A549 (cell line): ENCODE measurements at regions of chr9 and their contacts with region 1.

Region 1: GRCh38 chr9:124126571-124127289 is 115.2 kb downstream of the LHX2 start:
- DNase-seq: peak; percentile 71 to 75
- ATAC-seq: peak; percentile 62 to 82; a peak in 5 of 6 replicates
- H3K4me3 ChIP-seq: no peak overlapping the region
- H3K27ac ChIP-seq: peak overlapping the region in 1 of 2 experiments; percentile 47; a peak in 2 of 6 replicates
- H3K4me1 ChIP-seq: peaks cover 14% of the 10 kb centered on the region; the same call in 2 of the 3 replicates
- CTCF ChIP-seq: peak; percentile 91
- EP300 ChIP-seq: no peak
- POLR2A ChIP-seq: no peak
- RAD21 ChIP-seq: peak; percentile 93 to 95

Region 2: DNA sequence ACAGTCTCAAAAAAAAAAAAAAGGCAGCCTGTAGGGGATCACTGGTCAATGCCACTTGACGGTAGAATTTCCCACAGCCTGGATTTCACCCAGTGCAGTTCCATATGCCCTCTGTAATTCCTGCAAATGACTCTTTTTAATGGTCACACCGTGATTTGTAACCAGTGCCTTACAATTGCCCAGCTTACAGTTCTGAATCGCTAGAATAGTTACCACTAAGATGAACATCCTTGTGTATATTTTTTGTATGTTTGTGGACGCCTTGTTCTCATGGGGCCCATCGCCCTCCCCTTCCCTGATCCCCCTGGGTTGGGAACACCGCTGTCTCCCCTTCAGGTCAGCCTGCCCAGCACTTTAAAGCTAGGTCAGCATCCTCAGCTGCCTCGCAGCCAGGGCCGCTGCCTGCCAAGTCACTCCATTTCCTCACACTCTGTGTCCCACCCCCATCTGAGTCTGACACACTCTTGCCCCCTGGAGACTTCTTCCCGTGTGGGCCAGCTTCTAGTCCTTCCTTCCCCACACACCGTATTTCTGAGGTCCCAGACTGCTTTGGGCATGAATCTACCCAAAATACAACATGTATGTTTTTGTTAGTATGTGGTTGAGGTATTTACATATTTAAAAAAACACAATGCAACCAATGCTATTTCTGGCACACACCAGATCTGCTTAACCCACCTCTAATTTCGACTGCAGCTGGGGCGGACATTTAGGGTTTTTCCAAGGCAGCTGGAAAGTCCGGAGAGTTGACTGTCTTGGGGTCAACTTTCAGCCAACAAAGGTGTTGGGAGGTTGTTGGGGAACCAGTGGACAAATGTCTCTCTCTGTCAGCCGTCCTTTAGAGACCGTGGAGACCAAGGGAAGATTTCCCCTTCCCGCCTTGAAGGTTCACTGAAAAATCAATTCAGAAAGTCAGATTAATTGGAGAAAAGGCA is 10.5 kb after region 1 on chr9:
- CTCF ChIA-PET with region 1: interaction called, 20 read pairs
- POLR2A ChIA-PET with region 1: no interaction called
- DNase-seq: no peak
- ATAC-seq: no peak
- H3K4me3 ChIP-seq: no peak overlapping the region
- H3K27ac ChIP-seq: peak overlapping the region in 1 of 2 experiments; percentile 15; a peak in 1 of 6 replicates
- H3K4me1 ChIP-seq: no peaks in the 10 kb centered on the region
- CTCF ChIP-seq: no peak
- EP300 ChIP-seq: no peak
- POLR2A ChIP-seq: no peak
- RAD21 ChIP-seq: no peak

Region 3: GRCh38 chr9:124190761-124191160 is 64.0 kb after region 1 on chr9:
- CTCF ChIA-PET with region 1: interaction called, 10 read pairs
- POLR2A ChIA-PET with region 1: no interaction called
- DNase-seq: no peak
- ATAC-seq: no peak
- H3K4me3 ChIP-seq: no peak overlapping the region
- H3K27ac ChIP-seq: no peak overlapping the region
- H3K4me1 ChIP-seq: no peaks in the 10 kb centered on the region
- CTCF ChIP-seq: no peak
- EP300 ChIP-seq: no peak
- POLR2A ChIP-seq: no peak
- RAD21 ChIP-seq: no peak

Region 4: DNA sequence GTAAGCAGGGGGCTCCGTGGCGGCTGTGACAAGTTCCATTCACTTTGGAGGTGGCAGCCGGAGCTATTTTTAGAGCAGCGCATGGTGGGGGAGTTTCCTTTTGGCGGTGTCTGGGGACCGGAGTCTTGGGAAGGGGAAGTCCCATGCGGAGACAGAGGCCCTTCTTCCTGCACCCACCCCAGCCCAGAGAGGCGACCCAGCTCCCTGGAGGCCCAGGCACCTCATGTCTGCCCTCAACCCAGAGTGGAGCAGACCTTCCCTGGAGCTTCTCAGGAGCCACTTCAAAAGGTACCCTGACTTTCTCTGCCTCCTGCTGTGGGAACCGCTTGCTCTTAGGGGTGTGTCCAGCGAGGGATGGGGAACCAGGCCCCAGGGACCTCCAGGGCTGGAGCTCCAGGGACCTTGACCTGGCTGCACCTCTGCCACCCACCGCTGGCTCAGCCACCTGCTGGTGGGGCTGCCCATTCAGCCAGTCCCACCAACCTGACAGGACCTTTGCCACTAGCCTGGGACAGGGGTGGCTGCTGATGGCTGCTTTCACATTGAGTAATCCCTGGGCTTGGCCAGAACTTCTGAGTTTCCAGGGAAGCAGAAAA is 165.2 kb after region 1 on chr9:
- CTCF ChIA-PET with region 1: interaction called, 16 read pairs
- POLR2A ChIA-PET with region 1: no interaction called
- DNase-seq: no peak
- ATAC-seq: peak in 1 of 2 experiments; percentile 19; a peak in 3 of 6 replicates
- H3K4me3 ChIP-seq: no peak overlapping the region
- H3K27ac ChIP-seq: peak overlapping the region; percentile 42 to 71; a peak in 5 of 6 replicates
- H3K4me1 ChIP-seq: peaks cover 74% of the 10 kb centered on the region
- CTCF ChIP-seq: no peak
- EP300 ChIP-seq: no peak
- POLR2A ChIP-seq: no peak
- RAD21 ChIP-seq: no peak

Region 5: DNA sequence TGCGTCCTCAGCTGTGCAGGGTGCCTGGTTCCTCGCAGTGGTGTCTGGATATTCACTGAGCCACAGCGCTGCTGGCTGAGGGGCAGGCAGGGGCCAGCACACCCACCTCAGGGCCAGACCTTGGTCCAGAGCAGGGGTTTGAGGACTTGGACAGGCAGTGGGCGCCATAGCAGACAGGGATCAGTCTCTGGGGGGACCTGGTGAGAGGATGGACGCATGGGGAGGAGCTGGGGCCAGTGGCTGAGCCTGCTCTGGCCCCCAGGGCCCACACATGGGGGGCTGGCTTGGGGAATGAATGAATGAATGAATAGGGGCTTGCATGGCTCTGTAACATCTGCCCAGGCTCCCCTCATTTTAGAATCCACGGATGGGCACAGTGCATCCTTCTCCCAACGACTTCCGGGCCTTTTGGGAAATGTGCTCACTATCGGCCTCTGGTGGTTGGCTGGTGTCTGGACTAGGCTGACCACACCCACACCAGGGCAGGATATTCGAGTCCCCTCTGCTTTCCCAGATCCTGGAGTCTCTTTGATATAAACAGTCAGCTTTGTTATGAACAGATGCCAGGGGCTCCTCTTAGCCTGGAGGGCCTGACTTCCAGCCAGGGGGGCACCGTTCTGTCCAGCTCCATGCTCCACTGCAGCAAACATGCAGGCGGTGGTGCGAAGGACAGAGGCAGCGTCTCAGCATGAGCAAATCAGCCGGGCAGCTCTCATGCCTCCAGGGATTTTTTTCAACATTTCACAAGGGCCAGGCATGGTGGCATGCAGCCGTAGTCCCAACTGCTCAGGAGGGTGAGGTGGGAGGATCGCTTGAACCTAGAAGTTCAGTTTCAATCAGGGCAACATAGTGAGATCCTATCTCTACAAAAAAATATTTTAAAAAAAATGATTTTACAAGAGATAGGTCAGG is 193.6 kb after region 1 on chr9:
- CTCF ChIA-PET with region 1: interaction called, 49 read pairs
- POLR2A ChIA-PET with region 1: no interaction called
- DNase-seq: peak; percentile 64 to 91
- ATAC-seq: peak; percentile 91 to 95
- H3K4me3 ChIP-seq: no peak overlapping the region
- H3K27ac ChIP-seq: peak overlapping the region; percentile 46 to 70; a peak in 4 of 6 replicates
- H3K4me1 ChIP-seq: 0 out of 3 replicates have a peak, but pooled peaks cover 3% of the 10 kb centered on the region
- CTCF ChIP-seq: peak; percentile 78
- EP300 ChIP-seq: no peak
- POLR2A ChIP-seq: no peak
- RAD21 ChIP-seq: peak; percentile 70 to 74

Region 6: GRCh38 chr9:124357721-124358361 is 231.1 kb after region 1 on chr9:
- CTCF ChIA-PET with region 1: interaction called, 13 read pairs
- POLR2A ChIA-PET with region 1: no interaction called
- DNase-seq: no peak
- ATAC-seq: peak in 1 of 2 experiments; percentile 53; a peak in 3 of 6 replicates
- H3K4me3 ChIP-seq: no peak overlapping the region
- H3K27ac ChIP-seq: no peak overlapping the region
- H3K4me1 ChIP-seq: no peaks in the 10 kb centered on the region
- CTCF ChIP-seq: peak; percentile 36
- EP300 ChIP-seq: no peak
- POLR2A ChIP-seq: no peak
- RAD21 ChIP-seq: peak; percentile 24 to 49; a peak in 2 of 5 replicates

Region 7: GRCh38 chr9:124441291-124441690 is 314.6 kb after region 1 on chr9:
- CTCF ChIA-PET with region 1: no interaction called
- POLR2A ChIA-PET with region 1: no interaction called
- DNase-seq: no peak
- ATAC-seq: no peak
- H3K4me3 ChIP-seq: no peak overlapping the region
- H3K27ac ChIP-seq: no peak overlapping the region
- H3K4me1 ChIP-seq: no peaks in the 10 kb centered on the region
- CTCF ChIP-seq: no peak
- EP300 ChIP-seq: no peak
- POLR2A ChIP-seq: no peak
- RAD21 ChIP-seq: no peak